Right ventricle myocardium inferior (tissue), 1 donor: ENCODE measurements at regions of chr15 and their contacts with region 1.

Region 1: DNA sequence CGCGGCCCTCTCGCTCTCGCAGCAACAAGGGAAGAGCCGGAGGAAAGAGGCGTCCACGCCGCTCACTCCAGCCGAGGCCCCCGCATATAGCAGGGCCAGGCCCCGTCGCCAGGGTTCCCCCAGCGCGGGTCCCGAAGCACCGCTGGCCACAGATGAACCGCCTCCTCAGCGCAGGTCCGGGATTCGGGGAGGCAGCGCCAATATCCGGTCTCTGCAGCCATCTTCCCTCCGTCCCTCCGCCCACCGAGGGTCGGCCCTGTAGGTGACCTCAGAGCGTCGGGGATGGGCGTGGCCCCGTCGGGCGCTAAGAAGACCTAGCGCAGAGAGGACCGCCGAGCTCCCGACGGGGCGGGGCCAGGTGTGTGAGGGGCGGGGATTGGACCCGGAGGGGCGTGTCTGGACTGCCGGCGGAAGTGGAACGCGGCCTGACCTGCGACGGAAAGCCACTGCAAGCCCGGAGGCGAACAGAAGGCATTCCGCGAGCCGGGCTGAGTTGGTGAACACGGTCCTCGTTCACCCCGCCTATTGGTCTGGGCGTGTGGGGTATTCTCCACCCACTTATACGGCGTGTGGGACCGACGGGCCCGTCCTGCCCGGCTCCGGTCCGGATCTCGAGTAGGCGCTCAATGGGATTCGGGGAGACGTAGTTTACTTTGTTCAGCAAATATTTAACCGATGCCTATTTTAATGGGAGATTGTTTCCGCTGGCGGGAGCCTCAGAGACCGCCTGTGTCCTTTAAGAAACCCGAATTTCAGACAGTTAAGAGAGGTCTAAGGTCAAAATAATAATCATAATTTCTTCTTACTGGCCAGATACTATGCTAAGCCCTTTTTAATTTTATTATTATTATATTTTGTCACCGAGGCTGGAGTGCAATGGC is 26.9 kb upstream of the MTHFS start:
- DNase-seq: peak; percentile 98
- ATAC-seq: peak; percentile 99

Region 2: DNA sequence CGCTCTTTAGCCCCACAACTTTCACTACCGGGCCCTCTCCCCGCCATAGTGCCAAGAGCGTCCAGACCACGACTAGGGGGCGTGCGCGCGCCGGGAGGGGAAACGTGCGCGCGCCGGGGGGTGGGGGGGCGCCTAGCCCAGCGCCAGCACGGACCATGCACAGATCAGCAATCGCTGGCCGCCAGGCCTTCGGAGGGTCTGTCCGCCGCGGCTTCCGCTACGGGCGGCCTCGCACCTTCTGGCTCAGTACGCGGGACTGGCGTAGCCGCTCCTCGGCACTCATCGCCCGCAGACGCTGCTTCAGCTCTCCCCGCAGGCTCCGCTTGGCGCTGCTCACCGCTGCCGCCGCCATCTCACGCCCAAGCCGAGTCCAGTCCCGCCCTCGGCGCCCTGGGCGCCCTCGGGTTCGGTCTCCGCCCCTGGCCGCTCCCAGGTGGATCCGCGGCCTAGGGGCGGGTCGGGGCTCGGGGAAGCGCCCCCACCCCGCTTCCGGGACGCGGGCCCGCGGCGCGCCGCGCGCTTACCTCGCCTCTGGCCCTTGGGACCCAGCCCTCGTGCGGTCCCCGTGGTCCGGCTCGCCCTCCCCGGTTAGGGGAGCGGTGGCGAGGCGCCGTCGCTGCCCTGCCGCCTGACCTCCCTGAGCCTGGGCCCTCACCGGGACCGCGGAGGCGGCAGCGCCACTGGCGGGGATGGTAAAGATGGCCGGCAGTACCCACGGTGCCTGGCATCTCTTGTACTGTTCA is 26.9 kb before region 1 on chr15 and contains the start of gene MTHFS:
- intact Hi-C with region 1: loop called (anchors 1 kb)
- DNase-seq: peak; percentile 91
- ATAC-seq: peak; percentile 99
- total RNA-seq, gene MTHFS: 19.1 TPM

Region 3: DNA sequence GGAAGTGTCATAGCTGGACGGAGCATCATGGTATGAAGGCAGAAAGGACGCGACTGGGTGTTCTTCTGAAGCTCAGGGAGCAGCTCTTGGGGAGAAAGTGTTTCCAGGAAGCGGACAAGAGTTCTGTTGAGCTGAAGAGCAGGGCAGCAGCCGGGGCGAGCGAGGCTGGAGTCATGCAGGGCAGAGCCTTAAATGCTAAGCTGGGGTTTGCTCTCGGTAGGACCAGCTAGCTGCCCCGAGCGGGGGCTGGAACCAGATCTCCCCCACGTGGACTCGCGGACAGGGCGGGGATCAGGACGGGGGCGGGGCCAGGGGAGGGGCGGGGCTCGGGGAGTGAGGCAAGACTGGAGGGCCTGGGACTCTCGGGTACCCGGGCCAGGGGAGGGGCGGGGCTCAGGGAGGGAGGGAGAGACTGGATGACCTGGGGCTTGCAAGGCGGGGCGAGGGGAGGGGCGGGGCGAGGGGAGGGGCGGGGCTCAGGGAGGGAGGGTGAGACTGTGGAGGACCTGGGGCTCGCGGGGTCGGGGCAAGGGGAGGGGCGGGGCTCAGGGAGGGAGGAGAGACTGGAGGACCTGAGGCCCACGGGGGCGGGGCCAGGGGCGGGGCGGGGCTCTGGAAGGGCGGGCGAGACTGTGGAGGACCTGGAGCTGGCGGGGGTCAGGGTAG is 228.6 kb after region 1 on chr15:
- intact Hi-C with region 1: loop called (anchors 5 kb)
- DNase-seq: peak; percentile 98
- ATAC-seq: peak; percentile 90